Ascending aorta (tissue), 2 donors: ENCODE measurements at regions of chr1 and their contacts with region 1.

Region 1: DNA sequence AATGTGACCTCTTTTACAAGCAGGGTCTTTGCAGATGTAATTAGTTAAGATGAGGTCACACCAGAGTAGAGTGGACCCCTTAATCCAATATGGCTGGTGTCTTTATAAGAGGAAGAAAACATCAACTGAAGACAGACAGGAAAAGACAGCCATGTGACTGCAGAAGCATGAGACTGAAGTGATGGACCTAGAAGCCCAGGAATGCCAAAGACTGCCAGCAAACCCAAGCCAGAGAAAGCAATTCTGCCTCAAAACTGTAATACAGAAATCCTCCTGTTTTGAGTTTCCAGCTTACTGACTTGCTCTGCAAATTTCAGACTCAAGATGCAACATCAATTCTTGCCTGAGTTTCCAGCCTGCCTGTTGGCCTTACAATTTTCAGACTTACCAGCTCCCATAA is 17.3 kb downstream of the ENAH start:
- DNase-seq: no peak
- H3K4me3 ChIP-seq: no peak overlapping the region
- H3K27ac ChIP-seq: no peak overlapping the region
- H3K4me1 ChIP-seq: peaks cover 0 to 7% of the 10 kb centered on the region in 2 donors
- H3K27me3 ChIP-seq: no peaks in the 10 kb centered on the region
- CTCF ChIP-seq: no peak

Region 2: DNA sequence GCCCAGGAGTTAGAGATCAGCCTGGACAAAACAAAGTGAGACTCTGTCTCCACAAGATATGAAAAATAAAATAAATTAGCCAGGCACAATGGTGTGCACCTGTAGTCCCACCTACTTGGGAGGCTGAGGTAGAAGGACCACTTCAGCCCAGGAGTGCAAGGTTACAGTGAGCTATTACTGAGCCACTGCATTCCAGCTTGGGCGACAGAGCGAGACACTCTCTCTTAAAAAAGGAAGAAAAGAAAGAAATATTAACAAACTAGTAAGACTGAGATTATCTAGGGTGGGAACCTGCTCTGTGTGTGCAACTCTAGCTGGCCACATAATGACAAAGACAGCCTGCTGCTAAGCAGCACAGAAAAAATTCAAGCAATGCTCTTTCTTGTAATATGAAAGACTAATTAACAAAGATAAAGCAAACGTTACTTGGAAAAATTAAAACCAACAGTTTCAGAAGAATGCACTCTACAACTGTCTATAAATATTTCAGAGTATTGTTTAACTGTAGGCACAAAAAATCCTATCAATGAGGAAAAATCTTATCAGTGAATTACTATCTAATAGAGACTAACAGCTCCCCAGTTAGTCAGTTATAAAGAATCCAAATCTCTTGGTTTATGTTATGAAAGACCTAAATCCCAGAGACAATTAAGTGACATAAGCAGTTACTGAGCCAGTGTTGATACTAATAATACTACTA is 57.2 kb before region 1 on chr1:
- intact Hi-C with region 1: loop called (anchors 5 kb)
- DNase-seq: no peak
- H3K4me3 ChIP-seq: no peak overlapping the region
- H3K27ac ChIP-seq: peak overlapping the region in 1 of 2 donors; percentile 30
- H3K4me1 ChIP-seq: peaks cover 4 to 30% of the 10 kb centered on the region in 2 donors
- H3K27me3 ChIP-seq: no peaks in the 10 kb centered on the region
- CTCF ChIP-seq: no peak